Activated T-helper 1 cell treated with anti-CD3 and anti-CD28 coated beads, Interleukin-12 subunit alpha, Interleukin-12 subunit beta, Interleukin-2, Interleukin-4 antibody, amounts not matched to agents 30 ng/mL and 10 ng/mL and 1 ng/mL, durations not matched to agents 14 hours and 24 hours and 36 hours (primary cell): ENCODE measurements at regions of chr12 and their contacts with region 1.

Region 1: DNA sequence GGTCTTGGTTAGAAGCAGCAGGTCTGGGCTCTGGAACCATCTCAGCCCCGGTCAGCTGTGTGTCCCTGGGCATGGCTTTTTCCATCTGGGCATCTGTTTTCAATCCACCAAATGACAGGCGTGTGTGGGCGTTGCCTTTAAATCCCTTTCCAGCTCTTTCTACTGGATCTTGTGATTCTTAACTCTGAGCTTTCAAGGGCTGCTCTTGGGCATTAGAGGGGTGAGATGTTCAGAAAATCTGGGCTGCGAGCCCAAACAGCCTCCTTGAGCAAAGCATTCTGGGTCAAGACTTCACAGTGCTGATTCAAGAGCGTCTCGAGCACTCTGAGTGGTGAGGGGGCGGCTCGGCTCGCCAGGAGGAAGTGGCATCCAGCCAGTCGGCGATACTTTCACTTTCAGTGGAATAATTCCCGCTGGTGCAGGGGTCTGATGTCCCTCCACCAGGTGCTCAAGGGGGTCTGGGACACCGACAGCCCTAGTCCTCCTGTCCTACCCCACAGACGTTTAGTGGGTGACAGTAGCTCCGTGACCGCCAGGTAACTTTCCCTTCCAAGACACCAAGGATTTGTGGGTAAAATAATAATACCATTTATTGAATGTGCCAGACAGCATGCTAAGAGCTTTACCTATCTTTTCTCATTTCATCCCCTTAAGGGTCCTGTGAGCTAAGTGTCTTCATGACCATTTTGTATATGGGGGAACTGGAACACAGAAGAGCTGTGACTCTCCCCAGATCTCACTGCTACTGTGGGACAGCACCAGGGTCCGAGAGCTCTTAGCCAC is 114.0 kb downstream of the PLXNC1 start:
- DNase-seq: peak; percentile 56
- H3K4me3 Mint-ChIP-seq: peak overlapping the region; percentile 84
- H3K27ac Mint-ChIP-seq: peak overlapping the region; percentile 96
- H3K4me1 Mint-ChIP-seq: peaks cover 55% of the 10 kb centered on the region
- H3K27me3 Mint-ChIP-seq: no peaks in the 10 kb centered on the region

Region 2: DNA sequence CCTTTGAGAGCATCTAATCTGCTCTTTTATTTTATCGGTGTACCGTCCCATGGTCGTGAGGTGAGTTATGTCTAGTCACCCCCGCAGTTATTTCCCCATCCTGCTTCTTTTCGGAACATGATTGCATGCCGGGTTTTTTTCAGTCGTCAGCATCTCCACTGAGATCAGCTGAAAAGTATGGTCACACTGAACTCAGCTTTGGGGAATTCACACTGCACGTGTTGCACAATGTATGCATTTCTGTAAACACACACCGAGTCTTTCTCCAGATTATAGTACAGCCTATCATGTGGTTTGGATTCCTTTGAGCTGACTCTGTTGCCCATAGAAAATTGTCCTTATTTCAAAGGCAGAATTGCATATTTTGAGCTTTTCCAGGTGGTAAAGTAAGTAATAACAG is 89.4 kb before region 1 on chr12:
- intact Hi-C with region 1: loop called (anchors 10 kb)
- DNase-seq: no peak
- H3K4me3 Mint-ChIP-seq: no peak overlapping the region
- H3K27ac Mint-ChIP-seq: no peak overlapping the region
- H3K4me1 Mint-ChIP-seq: peaks cover 66% of the 10 kb centered on the region
- H3K27me3 Mint-ChIP-seq: peaks cover 2% of the 10 kb centered on the region

Region 3: DNA sequence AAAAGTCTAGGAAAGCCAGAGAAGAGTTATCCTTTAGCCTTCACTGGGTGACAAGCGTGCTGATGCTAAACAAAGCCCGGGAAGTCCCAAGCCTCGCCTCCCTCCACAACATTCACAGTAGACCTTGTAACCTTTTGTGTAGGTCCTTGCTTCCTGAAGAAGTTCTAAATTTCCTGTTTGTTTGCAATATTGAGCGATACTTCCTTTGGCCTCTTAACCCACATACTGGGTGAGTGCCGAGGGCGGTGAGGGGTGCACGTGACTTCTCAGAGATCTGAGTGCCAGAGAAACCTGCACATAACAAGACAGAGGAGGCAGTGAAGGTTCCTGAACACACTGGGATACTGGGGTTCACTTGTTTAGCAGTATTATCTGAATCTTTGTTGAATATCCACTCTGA is 20.3 kb after region 1 on chr12:
- intact Hi-C with region 1: loop called (anchors 2 kb)
- DNase-seq: peak; percentile 32
- H3K4me3 Mint-ChIP-seq: peak overlapping the region; percentile 20
- H3K27ac Mint-ChIP-seq: peak overlapping the region; percentile 67
- H3K4me1 Mint-ChIP-seq: peaks cover 30% of the 10 kb centered on the region
- H3K27me3 Mint-ChIP-seq: no peaks in the 10 kb centered on the region

Region 4: GRCh38 chr12:94372461-94372860 is 110.0 kb after region 1 on chr12:
- intact Hi-C with region 1: loop called (anchors 1 kb)
- DNase-seq: no peak
- H3K4me3 Mint-ChIP-seq: peak overlapping the region; percentile 37
- H3K27ac Mint-ChIP-seq: peak overlapping the region; percentile 78
- H3K4me1 Mint-ChIP-seq: peaks cover 58% of the 10 kb centered on the region
- H3K27me3 Mint-ChIP-seq: no peaks in the 10 kb centered on the region

Region 5: GRCh38 chr12:94427501-94428381 is 165.3 kb after region 1 on chr12:
- intact Hi-C with region 1: loop called (anchors 1 kb)
- DNase-seq: no peak
- H3K4me3 Mint-ChIP-seq: no peak overlapping the region
- H3K27ac Mint-ChIP-seq: peak overlapping the region; percentile 49
- H3K4me1 Mint-ChIP-seq: peaks cover 18% of the 10 kb centered on the region
- H3K27me3 Mint-ChIP-seq: no peaks in the 10 kb centered on the region